ENCODE measurements at regions of chr6 and their contacts with region 1.

Region 1: DNA sequence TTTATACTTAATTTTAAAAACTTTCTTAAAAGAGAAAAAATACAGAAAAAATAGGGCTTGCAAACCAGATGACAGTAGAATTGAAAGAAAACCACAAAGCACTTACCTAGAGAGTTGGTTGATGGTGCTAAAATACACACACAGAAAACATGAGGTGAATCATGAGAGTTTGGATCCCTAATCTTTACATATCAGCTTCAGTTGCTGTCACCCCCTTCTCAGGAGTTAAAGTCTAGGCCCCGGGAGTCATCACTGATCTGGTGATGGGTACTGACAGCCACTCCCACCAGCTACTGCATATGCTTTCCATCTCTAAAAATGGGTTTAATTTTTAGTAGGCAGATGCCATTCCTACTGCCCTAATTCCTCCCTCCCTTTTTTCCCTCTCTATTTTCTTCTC is 16.7 kb downstream of the TSBP1 start:
- DNase-seq: no peak
- H3K4me3 Mint-ChIP-seq: no peak overlapping the region
- H3K27ac Mint-ChIP-seq: no peak overlapping the region
- H3K4me1 Mint-ChIP-seq: no peaks in the 10 kb centered on the region
- H3K27me3 Mint-ChIP-seq: peaks cover 26% of the 10 kb centered on the region
- CTCF ChIP-seq: no peak

Region 2: DNA sequence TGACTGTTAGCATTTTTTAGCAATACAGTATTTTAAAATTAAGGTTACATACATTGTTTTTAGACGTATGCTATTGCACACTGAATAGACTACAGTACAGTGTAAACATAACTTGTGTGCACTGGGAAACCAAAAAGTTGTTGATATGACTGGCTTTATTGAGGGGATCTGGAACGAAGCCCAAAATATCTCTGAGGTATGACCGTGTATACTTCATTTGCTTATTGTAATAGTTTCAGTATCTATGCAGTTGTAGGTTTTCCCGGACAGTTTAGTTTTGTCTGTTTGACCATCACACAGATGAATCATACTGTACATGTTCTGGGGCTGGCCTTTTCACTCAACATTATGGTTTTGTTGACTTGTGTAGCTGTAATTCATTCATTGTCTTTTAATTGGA is 446.2 kb before region 1 on chr6:
- CTCF ChIA-PET with region 1: no interaction called
- intact Hi-C with region 1: no loop called
- DNase-seq: no peak
- H3K4me3 Mint-ChIP-seq: no peak overlapping the region
- H3K27ac Mint-ChIP-seq: no peak overlapping the region
- H3K4me1 Mint-ChIP-seq: peaks cover 33% of the 10 kb centered on the region
- H3K27me3 Mint-ChIP-seq: no peaks in the 10 kb centered on the region
- CTCF ChIP-seq: no peak

Region 3: DNA sequence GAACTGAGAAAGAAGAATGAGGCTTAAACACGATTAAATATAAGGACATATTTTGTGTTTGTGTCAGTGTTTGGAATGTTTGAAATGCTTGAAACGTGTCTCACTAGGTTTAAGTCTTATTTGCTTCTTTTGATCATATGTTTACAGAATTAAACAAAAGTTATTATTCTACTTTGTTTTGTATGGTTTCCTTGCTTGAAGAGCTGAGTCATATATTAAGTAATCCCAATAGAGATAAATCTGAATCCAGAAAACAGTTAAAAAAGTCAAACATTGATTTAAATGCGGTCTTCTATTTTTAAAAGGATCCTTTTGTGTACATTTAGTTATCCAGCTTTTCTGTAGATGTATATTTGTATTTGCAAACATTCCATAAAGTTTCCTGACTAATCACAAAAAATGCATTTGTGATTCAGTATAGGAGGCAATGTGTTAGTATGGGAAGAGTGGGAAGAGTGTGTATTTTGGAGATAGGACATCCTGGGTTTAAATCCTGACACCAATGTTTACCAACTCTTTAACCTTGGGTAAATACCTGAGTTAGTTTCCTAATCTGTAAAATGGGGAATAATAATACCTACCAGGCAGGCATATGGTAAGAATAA is 56.3 kb before region 1 on chr6:
- CTCF ChIA-PET with region 1: no interaction called
- intact Hi-C with region 1: loop called (anchors 5 kb)
- DNase-seq: no peak
- H3K4me3 Mint-ChIP-seq: no peak overlapping the region
- H3K27ac Mint-ChIP-seq: peak overlapping the region; percentile 15
- H3K4me1 Mint-ChIP-seq: peaks cover 22% of the 10 kb centered on the region
- H3K27me3 Mint-ChIP-seq: peaks cover 4% of the 10 kb centered on the region
- CTCF ChIP-seq: no peak

Region 4: DNA sequence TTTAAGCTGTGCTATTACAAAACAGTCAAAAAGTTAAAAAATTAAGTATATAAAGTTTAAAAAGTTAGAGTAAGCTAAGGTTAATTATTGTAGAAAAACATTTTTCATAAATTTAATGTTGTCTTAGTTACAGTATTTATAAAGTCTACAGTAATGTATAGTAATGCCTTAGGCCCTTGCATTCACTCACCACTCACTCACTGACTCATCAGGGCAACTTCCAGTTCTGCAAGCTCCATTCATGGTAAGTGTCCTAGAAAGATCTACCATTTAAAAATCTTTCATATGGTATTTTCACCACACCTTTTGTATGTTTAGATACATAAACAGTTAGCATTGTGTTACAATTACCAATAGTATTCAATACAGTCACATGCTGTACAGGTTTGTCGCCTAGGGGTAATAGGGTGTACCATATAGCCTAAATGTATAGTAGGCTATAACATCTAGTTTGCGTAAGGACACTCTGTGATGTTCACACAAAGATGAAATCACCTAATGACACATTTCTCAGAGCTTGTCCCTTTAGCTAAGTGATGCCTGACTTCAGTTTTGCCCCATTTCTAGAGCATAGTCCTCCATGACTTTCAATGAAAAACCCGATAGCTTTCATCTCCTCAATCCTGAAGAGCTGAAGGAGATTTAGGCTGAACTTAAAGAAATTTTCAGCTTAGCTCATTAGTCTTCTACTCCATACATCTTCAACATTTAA is 69.7 kb after region 1 on chr6:
- CTCF ChIA-PET with region 1: no interaction called
- intact Hi-C with region 1: no loop called
- DNase-seq: no peak
- H3K4me3 Mint-ChIP-seq: no peak overlapping the region
- H3K27ac Mint-ChIP-seq: no peak overlapping the region
- H3K4me1 Mint-ChIP-seq: no peaks in the 10 kb centered on the region
- H3K27me3 Mint-ChIP-seq: peaks cover 65% of the 10 kb centered on the region
- CTCF ChIP-seq: no peak